Gastrocnemius medialis (tissue), 4 donors: ENCODE measurements at regions of chr4 and their contacts with region 1.

Region 1: DNA sequence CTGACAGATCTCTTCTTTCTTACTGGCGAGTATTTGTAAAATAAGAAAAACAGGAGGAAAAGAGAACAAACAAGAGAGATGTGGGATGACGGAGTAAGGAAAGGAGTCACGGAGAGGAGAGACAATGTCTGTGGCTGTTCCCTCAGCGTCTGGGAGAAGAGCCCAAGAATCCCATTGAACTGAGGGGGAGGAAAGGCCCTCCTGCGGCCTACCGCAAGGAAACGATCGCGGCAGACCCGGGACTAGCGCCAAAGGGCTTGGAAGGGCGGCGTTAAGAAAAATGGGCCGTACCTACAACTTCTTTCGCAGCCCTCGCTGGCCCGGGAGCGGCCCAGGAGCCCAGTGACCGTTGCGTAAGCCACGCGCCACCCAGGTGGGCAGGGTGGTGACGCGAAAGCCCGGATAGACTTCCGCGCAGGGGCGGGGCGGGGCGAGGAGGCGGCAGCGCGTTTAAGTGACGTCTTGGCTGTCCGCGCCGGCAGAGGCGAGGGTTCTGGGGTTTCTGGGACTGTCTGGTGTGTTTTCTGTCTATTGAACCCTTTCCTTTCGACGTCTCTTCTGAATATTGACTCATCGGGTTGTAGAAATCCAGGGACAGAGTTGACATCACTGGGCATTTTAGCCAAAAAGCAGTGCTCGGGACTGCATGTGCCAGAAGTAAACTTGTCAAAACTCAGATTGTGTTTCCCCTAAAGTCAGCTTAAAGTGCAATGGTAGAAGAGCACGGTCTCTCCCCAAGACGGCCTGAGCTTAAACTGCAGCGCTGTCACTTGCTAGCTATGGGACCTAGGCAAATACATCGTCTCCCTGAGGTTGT is at the start of gene SLC9B1:
- DNase-seq: peak; percentile 90 to 96
- ATAC-seq: peak; percentile 87 to 93
- H3K4me3 ChIP-seq: peak within 1 kb of the TSS; percentile 58 to 64 (median 62)
- H3K27ac ChIP-seq: peak within 1 kb of the TSS; percentile 90 to 96 (median 95)
- H3K4me1 ChIP-seq: peaks cover 15 to 21% of the 10 kb centered on the region in 2 donors
- H3K27me3 ChIP-seq: no peaks in the 10 kb centered on the region
- CTCF ChIP-seq: peak in 1 of 5 experiments; percentile 17
- POLR2A ChIP-seq: peak; percentile 84 to 86
- total RNA-seq, gene SLC9B1: not detected

Region 2: GRCh38 chr4:102449751-102450352 is 569.7 kb before region 1 on chr4:
- in situ Hi-C with region 1: loop called in 1 of 4 experiments (anchors 25 kb)
- intact Hi-C with region 1: no loop called
- DNase-seq: no peak
- ATAC-seq: peak; percentile 68 to 75
- H3K4me3 ChIP-seq: no peak overlapping the region
- H3K27ac ChIP-seq: no peak overlapping the region
- H3K4me1 ChIP-seq: no peaks in the 10 kb centered on the region
- H3K27me3 ChIP-seq: no peaks in the 10 kb centered on the region
- CTCF ChIP-seq: peak; percentile 27 to 68 (median 42)
- POLR2A ChIP-seq: no peak

Region 3: GRCh38 chr4:102466298-102466697 is 553.2 kb before region 1 on chr4:
- in situ Hi-C with region 1: no loop called
- intact Hi-C with region 1: no loop called
- DNase-seq: no peak
- ATAC-seq: no peak
- H3K4me3 ChIP-seq: no peak overlapping the region
- H3K27ac ChIP-seq: no peak overlapping the region
- H3K4me1 ChIP-seq: no peaks in the 10 kb centered on the region
- H3K27me3 ChIP-seq: no peaks in the 10 kb centered on the region
- CTCF ChIP-seq: no peak
- POLR2A ChIP-seq: no peak

Region 4: GRCh38 chr4:103075901-103076739 is 56.6 kb after region 1 on chr4:
- in situ Hi-C with region 1: no loop called
- intact Hi-C with region 1: loop called (anchors 2 kb)
- DNase-seq: peak; percentile 27 to 50
- ATAC-seq: peak; percentile 77 to 82
- H3K4me3 ChIP-seq: peak overlapping the region; percentile 69 to 94 (median 78)
- H3K27ac ChIP-seq: peak overlapping the region; percentile 79 to 95 (median 82)
- H3K4me1 ChIP-seq: peaks cover 6 to 21% of the 10 kb centered on the region in 2 donors
- H3K27me3 ChIP-seq: no peaks in the 10 kb centered on the region
- CTCF ChIP-seq: no peak
- POLR2A ChIP-seq: peak; percentile 13 to 45